ENCODE measurements at regions of chr2 and their contacts with region 1.

Region 1: DNA sequence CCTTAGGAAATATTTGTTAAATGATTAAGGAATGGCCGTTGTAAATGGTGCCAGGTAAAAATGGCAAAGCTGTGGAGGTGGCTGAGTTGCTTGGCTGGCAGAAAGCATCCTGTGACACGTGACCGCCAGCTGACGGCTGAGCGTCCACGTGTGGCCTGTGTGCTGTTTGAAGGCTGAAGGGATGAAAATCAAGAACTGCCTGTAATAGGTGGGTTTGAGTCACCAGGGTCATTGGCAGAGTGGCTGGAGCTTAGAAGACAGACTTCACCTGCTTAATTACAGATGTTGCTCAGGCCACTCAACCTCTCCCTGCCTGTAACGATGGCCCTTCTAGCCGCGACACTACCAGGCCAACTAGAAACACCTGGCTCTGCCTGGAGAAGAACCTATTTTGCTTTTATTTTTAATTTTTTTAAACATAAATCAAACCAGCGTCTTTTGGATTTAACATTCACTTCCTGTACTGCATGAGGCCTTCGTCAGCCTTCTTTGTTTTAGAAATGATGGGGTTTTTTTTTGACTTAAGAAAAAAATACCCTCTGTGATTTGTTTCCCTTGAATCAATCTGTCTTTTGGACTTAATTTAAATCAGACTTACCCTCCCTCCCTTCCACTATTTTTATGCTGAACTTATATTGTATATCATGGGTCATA is 206.5 kb downstream of the PRKCE start:
- DNase-seq: no peak
- H3K4me3 ChIP-seq: no peak overlapping the region
- CTCF ChIP-seq: no peak

Region 2: DNA sequence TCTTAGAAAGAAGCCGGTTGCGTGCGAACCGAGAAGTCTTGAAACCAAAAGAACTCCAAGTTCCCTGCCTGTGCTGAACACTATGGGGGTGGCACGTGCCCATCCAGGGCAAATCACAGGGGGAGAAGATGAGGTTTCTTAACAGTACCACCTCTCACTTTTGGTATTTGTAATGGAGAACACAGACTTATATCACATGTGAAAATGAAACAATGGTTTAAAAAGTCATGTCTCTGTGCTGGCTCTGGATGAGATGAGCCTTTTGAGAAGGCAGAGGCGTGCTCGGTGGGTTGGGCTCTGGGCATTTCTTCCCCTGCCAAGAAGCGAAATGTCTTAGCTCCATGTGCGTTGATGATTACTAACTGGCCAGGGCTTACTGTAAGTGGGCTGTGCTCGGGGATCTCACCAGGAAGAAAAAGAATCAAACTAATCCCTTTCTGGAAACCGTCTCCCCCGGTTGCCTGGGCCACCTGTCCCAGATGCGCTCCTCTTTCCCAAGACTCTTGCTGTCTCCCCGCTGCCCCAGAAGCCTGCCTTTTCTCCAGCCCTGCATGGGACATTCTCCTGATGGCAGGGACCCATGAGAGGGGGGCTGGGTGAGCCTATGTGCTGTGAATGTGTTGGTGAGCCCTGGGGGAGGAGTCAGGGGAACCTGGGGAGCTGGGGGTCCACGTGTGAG is 46.4 kb after region 1 on chr2:
- in situ Hi-C with region 1: no loop called
- DNase-seq: no peak
- H3K4me3 ChIP-seq: no peak overlapping the region
- CTCF ChIP-seq: no peak

Region 3: DNA sequence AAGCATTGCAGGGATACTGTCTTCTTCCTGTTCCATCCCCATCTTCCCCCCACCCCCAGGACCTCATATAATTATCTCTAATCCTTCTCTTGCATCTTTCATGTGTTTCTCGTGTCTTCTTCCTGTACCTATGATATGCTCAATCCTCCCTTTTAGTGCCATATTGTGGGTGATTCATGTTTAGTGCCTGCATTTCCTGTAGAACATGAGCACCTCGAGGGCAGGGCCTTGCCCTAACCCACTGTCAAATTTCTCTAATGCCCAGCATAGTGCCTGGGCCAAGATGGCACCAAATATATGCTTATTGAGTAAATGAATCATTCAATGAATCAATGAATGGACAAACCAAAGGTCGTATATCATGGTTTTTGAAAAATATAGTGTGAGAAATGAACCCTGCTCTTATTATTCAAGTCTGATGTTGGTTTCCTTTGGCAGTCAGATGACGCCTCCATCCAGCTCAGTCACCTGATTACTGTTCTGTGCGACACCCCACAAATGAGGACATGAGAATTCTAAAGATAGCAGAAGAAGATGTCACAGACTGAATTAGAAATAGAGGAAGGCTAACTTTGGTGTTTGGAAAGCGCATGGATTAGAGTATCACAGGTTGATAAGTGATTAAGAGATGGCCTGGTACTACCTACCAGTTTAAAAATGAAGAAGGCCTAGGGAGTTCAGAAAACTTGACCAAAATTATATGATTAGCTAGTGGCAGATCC is 71.8 kb after region 1 on chr2:
- in situ Hi-C with region 1: loop called (anchors 5 kb)
- DNase-seq: no peak
- H3K4me3 ChIP-seq: no peak overlapping the region
- CTCF ChIP-seq: no peak

Measured in astrocyte of the cerebellum (primary cell).